Ascending aorta (tissue), 2 donors: ENCODE measurements at regions of chrX and their contacts with region 1.

Region 1: GRCh38 chrX:3010532-3010931 is 4.2 kb downstream of the ARSH start:
- DNase-seq: no peak
- H3K4me3 ChIP-seq: no peak overlapping the region
- H3K27ac ChIP-seq: no peak overlapping the region
- H3K4me1 ChIP-seq: no peaks in the 10 kb centered on the region
- H3K27me3 ChIP-seq: no peaks in the 10 kb centered on the region
- CTCF ChIP-seq: no peak

Region 2: DNA sequence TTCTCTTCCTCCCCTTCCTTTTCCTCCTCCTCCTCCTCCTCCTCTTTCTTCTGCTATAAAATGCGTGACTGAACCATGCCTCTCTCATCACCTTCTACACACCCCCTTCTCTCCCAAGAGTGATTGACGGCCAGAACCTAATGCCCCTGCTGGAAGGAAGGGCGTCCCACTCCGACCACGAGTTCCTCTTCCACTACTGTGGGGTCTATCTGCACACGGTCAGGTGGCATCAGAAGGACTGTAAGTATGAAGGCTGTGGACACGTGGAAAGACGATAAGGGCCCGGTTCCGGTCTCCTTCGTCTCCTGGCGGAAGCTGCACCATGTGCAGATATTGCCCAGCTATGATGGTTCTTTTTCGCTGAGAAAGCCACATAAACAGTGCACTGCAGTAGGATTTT is 18.6 kb after region 1 on chrX:
- intact Hi-C with region 1: loop called (anchors 1 kb)
- DNase-seq: no peak
- H3K4me3 ChIP-seq: no peak overlapping the region
- H3K27ac ChIP-seq: no peak overlapping the region
- H3K4me1 ChIP-seq: no peaks in the 10 kb centered on the region
- H3K27me3 ChIP-seq: no peaks in the 10 kb centered on the region
- CTCF ChIP-seq: no peak

Region 3: DNA sequence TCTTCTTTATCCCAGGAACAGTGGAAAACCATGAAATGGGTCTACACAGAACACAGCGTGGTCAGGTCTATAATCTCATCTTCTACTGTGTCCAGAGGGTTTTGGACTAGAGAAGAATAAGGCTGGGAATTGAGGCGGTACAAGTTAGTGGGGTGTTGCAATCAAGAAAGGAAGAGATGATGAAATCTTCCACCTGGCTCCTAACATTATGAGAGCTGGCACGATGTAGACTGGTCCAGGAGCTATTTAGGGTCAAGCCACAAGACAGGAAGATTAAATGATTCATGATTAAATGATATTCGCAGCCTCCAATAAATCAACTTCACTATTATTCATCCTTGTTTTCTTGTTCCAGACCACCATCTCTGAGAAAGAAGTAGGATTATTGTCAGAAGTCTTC is 118.7 kb after region 1 on chrX:
- intact Hi-C with region 1: no loop called
- DNase-seq: no peak
- H3K4me3 ChIP-seq: no peak overlapping the region
- H3K27ac ChIP-seq: no peak overlapping the region
- H3K4me1 ChIP-seq: no peaks in the 10 kb centered on the region
- H3K27me3 ChIP-seq: no peaks in the 10 kb centered on the region
- CTCF ChIP-seq: no peak